ENCODE measurements at regions of chr12 and their contacts with region 1.

Region 1: DNA sequence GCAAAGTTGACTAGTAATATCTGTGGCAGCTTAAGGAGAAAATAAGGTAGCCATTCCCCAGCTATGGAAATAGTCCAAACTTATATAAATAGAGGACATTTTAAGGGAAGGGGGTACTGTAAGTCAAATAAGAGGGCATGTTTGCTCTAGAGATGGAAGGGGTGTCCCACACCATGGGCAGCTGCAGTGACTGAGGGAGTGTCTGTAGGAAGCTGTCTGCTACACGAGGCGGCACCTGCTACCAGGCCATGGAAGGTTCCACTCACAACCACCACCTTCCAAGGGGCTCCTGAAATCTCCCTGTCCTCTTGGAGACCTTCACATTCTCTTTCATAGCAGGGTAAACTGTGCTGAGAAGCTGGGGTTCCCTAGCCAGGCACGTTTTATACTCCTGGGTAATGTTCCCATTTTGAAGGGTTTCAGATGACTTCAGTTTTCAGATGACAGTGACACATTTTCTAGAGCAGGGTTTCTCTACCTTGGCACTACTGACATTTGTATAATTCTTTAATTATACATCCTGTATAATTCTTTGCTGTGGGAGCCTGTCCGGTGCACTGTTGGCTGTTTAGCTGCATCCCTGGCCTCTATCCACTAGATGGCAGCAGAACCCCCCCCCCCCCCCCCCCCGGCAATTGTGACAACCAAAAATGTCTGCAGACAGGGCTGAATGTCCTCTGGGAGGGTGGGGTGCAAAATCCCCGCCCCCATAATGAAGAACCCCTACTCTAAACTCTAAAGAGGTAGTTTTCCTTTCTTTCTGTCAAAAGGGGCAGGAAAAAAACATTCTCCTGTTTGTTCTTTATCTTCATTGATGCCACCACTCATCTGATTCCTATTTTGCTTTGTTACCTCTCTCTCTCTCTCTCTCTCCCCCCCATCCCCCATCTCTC is 11.6 kb upstream of the SMCO2 start:
- DNase-seq: no peak
- H3K4me3 ChIP-seq: no peak overlapping the region
- H3K27ac ChIP-seq: no peak overlapping the region
- H3K4me1 ChIP-seq: peaks cover 0 to 8% (median 3%) of the 10 kb centered on the region in 4 donors
- H3K27me3 ChIP-seq: no peaks in the 10 kb centered on the region
- CTCF ChIP-seq: peak; percentile 34 to 36

Region 2: DNA sequence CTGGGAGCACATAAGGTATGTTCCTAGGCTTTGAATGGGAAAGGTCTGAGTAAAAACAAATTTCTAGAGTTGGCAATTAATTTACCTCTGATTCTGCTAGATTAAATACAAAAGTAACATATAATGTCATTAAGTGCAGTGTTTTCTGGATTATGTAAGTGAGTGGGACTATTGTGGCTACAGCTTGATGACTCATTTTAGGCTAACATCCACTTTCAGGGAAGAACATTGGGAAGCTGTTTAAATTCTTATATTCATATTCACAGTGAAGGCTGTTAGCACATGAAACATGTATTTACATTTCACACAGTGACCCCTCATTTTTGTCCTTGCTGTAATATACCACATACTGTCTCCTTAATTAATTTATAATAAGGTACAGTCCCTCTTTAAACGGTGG is 115.5 kb before region 1 on chr12:
- intact Hi-C with region 1: no loop called
- DNase-seq: no peak
- H3K4me3 ChIP-seq: no peak overlapping the region
- H3K27ac ChIP-seq: no peak overlapping the region
- H3K4me1 ChIP-seq: peaks cover 0 to 6% (median 0%) of the 10 kb centered on the region in 4 donors
- H3K27me3 ChIP-seq: no peaks in the 10 kb centered on the region
- CTCF ChIP-seq: no peak

Region 3: GRCh38 chr12:27635349-27635972 is 200.5 kb after region 1 on chr12:
- intact Hi-C with region 1: loop called (anchors 5 kb)
- DNase-seq: no peak
- H3K4me3 ChIP-seq: no peak overlapping the region
- H3K27ac ChIP-seq: no peak overlapping the region
- H3K4me1 ChIP-seq: peaks cover 0 to 25% (median 5%) of the 10 kb centered on the region in 4 donors
- H3K27me3 ChIP-seq: no peaks in the 10 kb centered on the region
- CTCF ChIP-seq: peak; percentile 67 to 78